Caco-2 (cell line): ENCODE measurements at regions of chr4 and their contacts with region 1.

Region 1: GRCh38 chr4:4666693-4667621 is 125.1 kb upstream of the STX18 start:
- DNase-seq: peak; percentile 73 to 82
- H3K4me3 ChIP-seq: no peak overlapping the region
- H3K4me3 Mint-ChIP-seq: peak overlapping the region; percentile 23
- H3K27ac Mint-ChIP-seq: peak overlapping the region; percentile 66
- H3K4me1 ChIP-seq: peaks cover 75% of the 10 kb centered on the region
- H3K4me1 Mint-ChIP-seq: peaks cover 43% of the 10 kb centered on the region
- H3K27me3 ChIP-seq: no peaks in the 10 kb centered on the region
- H3K27me3 Mint-ChIP-seq: no peaks in the 10 kb centered on the region
- CTCF ChIP-seq: no peak

Region 2: GRCh38 chr4:4606321-4606720 is 60.6 kb before region 1 on chr4:
- CTCF ChIA-PET with region 1: no interaction called
- POLR2A ChIA-PET with region 1: no interaction called
- intact Hi-C with region 1: loop called (anchors 2 kb)
- DNase-seq: no peak
- H3K4me3 ChIP-seq: no peak overlapping the region
- H3K4me3 Mint-ChIP-seq: no peak overlapping the region
- H3K27ac Mint-ChIP-seq: peak overlapping the region; percentile 18
- H3K4me1 ChIP-seq: peaks cover 35% of the 10 kb centered on the region
- H3K4me1 Mint-ChIP-seq: peaks cover 21% of the 10 kb centered on the region
- H3K27me3 ChIP-seq: no peaks in the 10 kb centered on the region
- H3K27me3 Mint-ChIP-seq: no peaks in the 10 kb centered on the region
- CTCF ChIP-seq: no peak

Region 3: GRCh38 chr4:4641661-4642495 is 25.1 kb before region 1 on chr4:
- CTCF ChIA-PET with region 1: interaction called, 3 read pairs
- POLR2A ChIA-PET with region 1: no interaction called
- intact Hi-C with region 1: loop called (anchors 1 kb)
- DNase-seq: peak; percentile 54 to 73
- H3K4me3 ChIP-seq: 0 out of 2 replicates have a peak overlapping the region, but pooled peaks have one; percentile 5
- H3K4me3 Mint-ChIP-seq: peak overlapping the region; percentile 56
- H3K27ac Mint-ChIP-seq: peak overlapping the region; percentile 81
- H3K4me1 ChIP-seq: peaks cover 58% of the 10 kb centered on the region
- H3K4me1 Mint-ChIP-seq: peaks cover 18% of the 10 kb centered on the region
- H3K27me3 ChIP-seq: no peaks in the 10 kb centered on the region
- H3K27me3 Mint-ChIP-seq: no peaks in the 10 kb centered on the region
- CTCF ChIP-seq: no peak

Region 4: DNA sequence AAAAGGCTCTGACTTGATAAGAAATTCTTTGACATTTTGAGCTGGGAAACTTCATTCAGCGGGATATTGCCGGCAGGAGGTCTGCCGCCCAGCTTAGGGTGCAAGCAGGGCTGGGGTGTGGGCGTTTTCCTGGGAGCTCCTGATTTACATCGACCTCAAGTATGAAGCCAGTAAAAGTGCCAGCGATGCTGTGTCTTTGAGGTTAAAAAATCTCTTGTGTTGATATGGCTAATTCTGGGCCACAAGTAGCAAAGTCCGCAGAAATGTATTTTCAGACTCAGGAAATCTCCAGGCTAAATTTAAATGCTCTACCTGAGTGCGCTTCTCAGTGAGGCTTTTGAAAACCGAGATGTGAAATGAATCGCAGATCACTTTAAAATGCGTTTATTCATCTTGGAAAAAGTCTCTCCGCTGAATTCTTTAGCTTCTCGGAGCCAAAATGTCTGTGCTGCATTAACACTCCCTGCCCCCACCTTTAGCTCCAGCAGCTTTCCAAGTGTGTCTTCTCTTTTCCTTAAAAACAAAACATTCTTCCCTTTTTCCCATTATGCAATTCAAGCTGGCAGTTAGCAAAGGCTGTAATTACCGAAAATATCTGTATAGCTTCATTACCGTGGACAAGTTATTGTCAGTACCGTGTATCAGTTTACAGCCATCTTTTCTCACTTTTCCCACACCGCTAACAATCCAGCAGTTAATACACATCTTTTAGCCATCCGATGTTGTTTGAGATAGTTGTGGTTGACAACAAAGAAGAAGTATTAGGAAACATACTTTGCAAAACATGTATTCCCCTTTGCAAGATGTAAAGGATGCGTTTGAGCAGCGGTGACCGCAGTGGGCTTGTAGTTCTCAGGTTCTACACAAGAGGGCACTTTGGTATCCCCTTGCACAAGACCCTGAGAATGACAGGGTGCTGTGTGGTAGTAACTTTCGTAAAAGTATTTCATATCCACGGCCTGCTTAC is 10.9 kb after region 1 on chr4:
- CTCF ChIA-PET with region 1: no interaction called
- POLR2A ChIA-PET with region 1: interaction called, 15 read pairs
- intact Hi-C with region 1: no loop called
- DNase-seq: peak in 1 of 2 experiments; percentile 17
- H3K4me3 ChIP-seq: no peak overlapping the region
- H3K4me3 Mint-ChIP-seq: no peak overlapping the region
- H3K27ac Mint-ChIP-seq: peak overlapping the region; percentile 37
- H3K4me1 ChIP-seq: peaks cover 29% of the 10 kb centered on the region
- H3K4me1 Mint-ChIP-seq: peaks cover 29% of the 10 kb centered on the region
- H3K27me3 ChIP-seq: no peaks in the 10 kb centered on the region
- H3K27me3 Mint-ChIP-seq: no peaks in the 10 kb centered on the region
- CTCF ChIP-seq: peak; percentile 15 to 44